Heart right ventricle (tissue), 16 donors: ENCODE measurements at regions of chr1 and their contacts with region 1.

Region 1: GRCh38 chr1:180863158-180863775 is 49.4 kb upstream of the KIAA1614 start:
- DNase-seq: peak in 1 of 2 donors; percentile 24
- ATAC-seq: peak in 2 of 8 donors; percentile 33 to 41
- H3K4me3 ChIP-seq: no peak overlapping the region
- H3K27ac ChIP-seq: peak overlapping the region in 1 of 10 donors; percentile 16
- H3K4me1 ChIP-seq: peaks cover 0 to 15% (median 0%) of the 10 kb centered on the region in 9 donors
- H3K27me3 ChIP-seq: no peaks in the 10 kb centered on the region
- CTCF ChIP-seq: peak; percentile 59 to 88 (median 79)

Region 2: GRCh38 chr1:180515864-180516388 is 347.3 kb before region 1 on chr1:
- intact Hi-C with region 1: loop called in 9 of 10 experiments (anchors 5 kb)
- DNase-seq: peak in 1 of 2 donors; percentile 72
- ATAC-seq: peak; percentile 91 to 97 (median 96)
- H3K4me3 ChIP-seq: no peak overlapping the region
- H3K27ac ChIP-seq: peak overlapping the region in 6 of 10 donors; percentile 16 to 36 (median 30)
- H3K4me1 ChIP-seq: peaks cover 0 to 31% (median 14%) of the 10 kb centered on the region in 9 donors
- H3K27me3 ChIP-seq: no peaks in the 10 kb centered on the region
- CTCF ChIP-seq: peak; percentile 67 to 92 (median 85)

Region 3: GRCh38 chr1:180623579-180624347 is 239.5 kb before region 1 on chr1:
- intact Hi-C with region 1: loop called in 1 of 10 experiments (anchors 5 kb)
- DNase-seq: no peak
- ATAC-seq: no peak
- H3K4me3 ChIP-seq: no peak overlapping the region
- H3K27ac ChIP-seq: no peak overlapping the region
- H3K4me1 ChIP-seq: no peaks in the 10 kb centered on the region
- H3K27me3 ChIP-seq: no peaks in the 10 kb centered on the region
- CTCF ChIP-seq: peak in 5 of 9 donors; percentile 15 to 52 (median 35)

Region 4: DNA sequence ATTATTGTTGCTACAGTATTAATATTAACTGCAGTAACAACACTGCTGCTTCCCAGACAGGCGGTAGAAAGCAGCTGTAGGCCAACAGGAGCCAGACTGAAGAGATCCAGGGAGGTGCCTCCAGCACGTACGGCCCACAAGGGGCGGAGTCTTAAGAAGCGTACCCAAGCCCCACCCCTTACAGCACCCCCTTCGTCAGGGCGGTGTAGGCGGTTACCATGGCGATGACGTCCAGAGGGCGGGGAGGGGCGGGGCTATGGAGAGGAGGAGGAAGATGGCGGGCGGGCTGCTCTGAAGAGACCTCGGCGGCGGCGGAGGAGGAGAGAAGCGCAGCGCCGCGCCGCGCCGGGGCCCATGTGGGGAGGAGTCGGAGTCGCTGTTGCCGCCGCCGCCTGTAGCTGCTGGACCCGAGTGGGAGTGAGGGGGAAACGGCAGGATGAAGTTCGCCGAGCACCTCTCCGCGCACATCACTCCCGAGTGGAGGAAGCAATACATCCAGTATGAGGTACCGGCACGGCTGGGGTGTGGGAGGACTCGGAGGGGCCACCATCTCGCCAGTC is 231.4 kb before region 1 on chr1 and contains the start of gene XPR1:
- intact Hi-C with region 1: loop called (anchors 5 to 10 kb)
- DNase-seq: peak; percentile 99
- ATAC-seq: peak; percentile 98 to 99 (median 99)
- H3K4me3 ChIP-seq: peak within 1 kb of the TSS; percentile 75 to 94 (median 86)
- H3K27ac ChIP-seq: peak within 1 kb of the TSS; percentile 90 to 98 (median 94)
- H3K4me1 ChIP-seq: peaks cover 0 to 51% (median 27%) of the 10 kb centered on the region in 9 donors
- H3K27me3 ChIP-seq: no peaks in the 10 kb centered on the region
- CTCF ChIP-seq: peak; percentile 13 to 55 (median 32)
- total RNA-seq, gene XPR1: 28.2 to 142 (median 78.7) TPM

Region 5: GRCh38 chr1:180791806-180792205 is 71.5 kb before region 1 on chr1:
- intact Hi-C with region 1: no loop called
- DNase-seq: no peak
- ATAC-seq: no peak
- H3K4me3 ChIP-seq: no peak overlapping the region
- H3K27ac ChIP-seq: no peak overlapping the region
- H3K4me1 ChIP-seq: peaks cover 0 to 48% (median 17%) of the 10 kb centered on the region in 9 donors
- H3K27me3 ChIP-seq: no peaks in the 10 kb centered on the region
- CTCF ChIP-seq: no peak